ENCODE measurements at regions of chr7 and their contacts with region 1.

Region 1: GRCh38 chr7:7157177-7157886 is 25.0 kb upstream of the C1GALT1 start:
- DNase-seq: peak; percentile 49
- H3K4me3 Mint-ChIP-seq: peak overlapping the region; percentile 71
- H3K27ac Mint-ChIP-seq: peak overlapping the region; percentile 84
- H3K4me1 Mint-ChIP-seq: peaks cover 40% of the 10 kb centered on the region
- H3K27me3 Mint-ChIP-seq: no peaks in the 10 kb centered on the region
- CTCF ChIP-seq: no peak

Region 2: DNA sequence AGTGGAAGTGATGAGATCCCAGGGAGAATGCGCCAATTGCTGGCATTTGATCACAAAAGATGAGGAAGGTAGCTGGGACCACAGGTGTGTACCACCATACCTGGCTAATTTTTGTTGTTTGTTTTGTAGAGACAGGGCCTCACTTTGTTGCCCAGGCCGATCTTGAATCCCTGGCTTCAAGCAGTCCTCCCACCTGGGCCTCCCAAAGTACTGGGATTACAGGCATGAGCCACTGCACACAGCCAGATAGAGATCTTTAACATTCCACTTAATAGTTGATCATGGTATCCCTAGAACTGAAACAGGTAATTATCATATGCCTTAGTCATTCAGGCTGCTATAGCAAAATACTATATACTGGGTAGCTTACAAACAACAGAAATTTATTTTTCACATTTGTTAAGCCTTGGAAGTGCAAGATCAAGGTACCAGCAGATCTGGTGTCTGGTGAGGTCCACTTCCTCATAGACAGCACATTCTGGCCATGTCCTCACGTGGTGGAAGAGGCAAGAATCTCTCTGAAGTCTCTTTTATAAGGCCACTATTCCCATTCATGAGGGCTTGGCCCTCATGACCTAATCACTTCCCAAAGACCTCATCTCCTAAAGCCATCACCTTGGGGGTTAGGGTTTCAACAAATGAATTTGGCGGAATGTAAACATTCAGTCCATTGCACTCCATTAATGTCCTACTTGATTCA is 112.7 kb before region 1 on chr7:
- CTCF ChIA-PET with region 1: no interaction called
- POLR2A ChIA-PET with region 1: no interaction called
- intact Hi-C with region 1: no loop called
- DNase-seq: no peak
- H3K4me3 Mint-ChIP-seq: no peak overlapping the region
- H3K27ac Mint-ChIP-seq: no peak overlapping the region
- H3K4me1 Mint-ChIP-seq: no peaks in the 10 kb centered on the region
- H3K27me3 Mint-ChIP-seq: no peaks in the 10 kb centered on the region
- CTCF ChIP-seq: no peak

Region 3: GRCh38 chr7:7122701-7123281 is 34.5 kb before region 1 on chr7:
- CTCF ChIA-PET with region 1: no interaction called
- POLR2A ChIA-PET with region 1: interaction called, 4 read pairs
- intact Hi-C with region 1: loop called (anchors 2 kb)
- DNase-seq: peak; percentile 97
- H3K4me3 Mint-ChIP-seq: no peak overlapping the region
- H3K27ac Mint-ChIP-seq: peak overlapping the region; percentile 9
- H3K4me1 Mint-ChIP-seq: peaks cover 13% of the 10 kb centered on the region
- H3K27me3 Mint-ChIP-seq: no peaks in the 10 kb centered on the region
- CTCF ChIP-seq: no peak

Region 4: DNA sequence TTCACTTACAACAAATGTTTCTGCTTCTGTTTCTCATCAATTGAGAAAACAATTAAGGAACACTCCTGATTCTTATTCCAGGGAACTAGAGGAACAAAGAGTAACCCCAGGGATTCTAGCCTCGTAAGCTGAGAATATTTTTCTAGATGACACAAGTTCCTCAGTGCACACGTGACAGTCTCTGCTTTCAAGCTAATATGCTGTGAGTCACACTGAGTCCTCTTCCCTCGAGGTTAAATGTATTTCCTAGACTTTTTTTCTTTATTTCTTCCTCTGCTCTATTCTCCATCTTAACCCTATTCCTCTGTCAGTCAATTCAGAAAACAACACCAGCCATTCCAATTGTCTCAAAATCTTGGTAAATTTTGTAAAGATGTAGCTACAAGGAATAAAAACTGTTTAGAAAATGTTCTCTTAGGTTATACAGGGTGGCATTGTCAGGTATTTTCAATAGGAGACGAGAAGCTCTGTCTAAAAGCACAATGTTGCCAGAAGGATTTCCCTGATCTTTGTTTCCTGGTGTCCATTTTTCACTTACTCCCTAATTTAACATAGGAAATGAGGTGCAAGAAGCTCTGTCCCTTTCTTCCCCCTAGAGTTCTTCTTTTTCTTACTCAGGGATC is 19.2 kb after region 1 on chr7:
- CTCF ChIA-PET with region 1: interaction called, 3 read pairs
- POLR2A ChIA-PET with region 1: interaction called, 29 read pairs
- intact Hi-C with region 1: no loop called
- DNase-seq: peak; percentile 91
- H3K4me3 Mint-ChIP-seq: peak overlapping the region; percentile 43
- H3K27ac Mint-ChIP-seq: peak overlapping the region; percentile 82
- H3K4me1 Mint-ChIP-seq: peaks cover 31% of the 10 kb centered on the region
- H3K27me3 Mint-ChIP-seq: no peaks in the 10 kb centered on the region
- CTCF ChIP-seq: no peak

Region 5: DNA sequence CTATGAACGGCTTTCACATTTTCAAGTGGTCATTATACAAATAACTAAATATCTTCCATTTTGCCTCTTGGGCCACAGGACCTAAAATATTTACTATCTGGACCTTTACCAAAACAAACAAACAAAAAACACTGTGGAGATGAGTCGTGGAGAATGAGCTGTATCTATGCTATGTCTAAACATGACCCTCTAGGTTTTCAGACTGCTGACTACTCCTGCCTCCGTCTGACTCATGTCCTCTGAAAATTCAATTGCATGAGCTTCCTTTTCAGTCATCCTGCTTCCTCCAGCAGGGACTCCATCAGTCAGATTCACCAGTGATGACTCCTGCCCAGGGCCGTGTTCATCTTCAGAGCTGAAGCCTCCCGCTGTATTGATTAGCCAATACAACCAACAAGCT is 281.5 kb after region 1 on chr7:
- CTCF ChIA-PET with region 1: no interaction called
- POLR2A ChIA-PET with region 1: no interaction called
- intact Hi-C with region 1: no loop called
- DNase-seq: peak; percentile 95
- H3K4me3 Mint-ChIP-seq: peak overlapping the region; percentile 36
- H3K27ac Mint-ChIP-seq: peak overlapping the region; percentile 88
- H3K4me1 Mint-ChIP-seq: peaks cover 13% of the 10 kb centered on the region
- H3K27me3 Mint-ChIP-seq: no peaks in the 10 kb centered on the region
- CTCF ChIP-seq: no peak

Measured in MCF 10A (cell line).